Activated naive CD4-positive, alpha-beta T cell treated with anti-CD3 and anti-CD28 coated beads, Interleukin-2, amount 10 ng/mL, durations not matched to agents 7 days and 5 days (primary cell): ENCODE measurements at regions of chr2 and their contacts with region 1.

Region 1: DNA sequence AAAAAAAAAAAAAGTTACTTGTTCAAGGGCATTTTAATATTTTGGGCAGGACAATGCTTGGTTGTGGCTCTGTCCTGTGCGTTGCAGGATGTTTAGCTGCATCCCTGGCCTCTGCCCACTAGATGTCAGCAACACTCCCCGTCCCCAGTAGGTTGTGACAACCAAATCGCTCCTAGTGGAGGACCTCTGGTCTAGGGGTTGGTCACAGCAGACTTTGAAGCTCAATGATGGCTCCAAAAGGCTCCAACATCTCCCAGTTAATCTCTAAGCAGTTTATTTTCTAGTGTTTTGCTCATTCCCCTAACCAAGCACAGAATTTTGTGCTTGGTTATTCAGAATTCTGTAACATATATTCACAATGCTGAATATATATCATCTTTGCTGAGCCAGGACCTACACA is 67.0 kb downstream of the CHRNA1 start:
- DNase-seq: peak; percentile 78
- H3K4me3 Mint-ChIP-seq: no peak overlapping the region
- H3K27ac Mint-ChIP-seq: no peak overlapping the region
- H3K4me1 Mint-ChIP-seq: peaks cover 2% of the 10 kb centered on the region
- H3K27me3 Mint-ChIP-seq: peaks cover 54% of the 10 kb centered on the region

Region 2: DNA sequence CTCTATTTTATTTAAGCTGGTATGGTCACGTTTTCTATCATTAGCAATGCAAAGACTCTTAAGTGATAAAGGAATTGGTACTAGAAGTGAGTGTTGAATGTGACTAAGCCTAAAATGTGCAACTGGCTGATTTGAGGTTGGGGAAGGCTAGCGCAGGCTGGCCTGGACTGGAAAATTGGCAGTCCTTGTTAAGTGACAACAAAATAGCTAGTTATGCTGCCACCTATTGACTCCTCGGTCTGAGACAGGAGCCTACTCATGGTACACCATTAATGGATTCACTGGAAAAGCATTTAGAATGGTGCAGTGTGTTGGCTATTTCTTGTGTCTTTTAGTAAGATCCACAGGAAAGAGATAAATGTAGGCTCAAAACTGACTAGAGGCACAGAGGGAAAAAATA is 94.0 kb before region 1 on chr2:
- CTCF ChIA-PET with region 1: interaction called, 15 read pairs
- DNase-seq: peak; percentile 68
- H3K4me3 Mint-ChIP-seq: no peak overlapping the region
- H3K27ac Mint-ChIP-seq: peak overlapping the region; percentile 65
- H3K4me1 Mint-ChIP-seq: peaks cover 90% of the 10 kb centered on the region
- H3K27me3 Mint-ChIP-seq: no peaks in the 10 kb centered on the region

Region 3: GRCh38 chr2:174644401-174644800 is 52.9 kb before region 1 on chr2:
- CTCF ChIA-PET with region 1: no interaction called
- DNase-seq: no peak
- H3K4me3 Mint-ChIP-seq: no peak overlapping the region
- H3K27ac Mint-ChIP-seq: no peak overlapping the region
- H3K4me1 Mint-ChIP-seq: peaks cover 8% of the 10 kb centered on the region
- H3K27me3 Mint-ChIP-seq: no peaks in the 10 kb centered on the region

Region 4: DNA sequence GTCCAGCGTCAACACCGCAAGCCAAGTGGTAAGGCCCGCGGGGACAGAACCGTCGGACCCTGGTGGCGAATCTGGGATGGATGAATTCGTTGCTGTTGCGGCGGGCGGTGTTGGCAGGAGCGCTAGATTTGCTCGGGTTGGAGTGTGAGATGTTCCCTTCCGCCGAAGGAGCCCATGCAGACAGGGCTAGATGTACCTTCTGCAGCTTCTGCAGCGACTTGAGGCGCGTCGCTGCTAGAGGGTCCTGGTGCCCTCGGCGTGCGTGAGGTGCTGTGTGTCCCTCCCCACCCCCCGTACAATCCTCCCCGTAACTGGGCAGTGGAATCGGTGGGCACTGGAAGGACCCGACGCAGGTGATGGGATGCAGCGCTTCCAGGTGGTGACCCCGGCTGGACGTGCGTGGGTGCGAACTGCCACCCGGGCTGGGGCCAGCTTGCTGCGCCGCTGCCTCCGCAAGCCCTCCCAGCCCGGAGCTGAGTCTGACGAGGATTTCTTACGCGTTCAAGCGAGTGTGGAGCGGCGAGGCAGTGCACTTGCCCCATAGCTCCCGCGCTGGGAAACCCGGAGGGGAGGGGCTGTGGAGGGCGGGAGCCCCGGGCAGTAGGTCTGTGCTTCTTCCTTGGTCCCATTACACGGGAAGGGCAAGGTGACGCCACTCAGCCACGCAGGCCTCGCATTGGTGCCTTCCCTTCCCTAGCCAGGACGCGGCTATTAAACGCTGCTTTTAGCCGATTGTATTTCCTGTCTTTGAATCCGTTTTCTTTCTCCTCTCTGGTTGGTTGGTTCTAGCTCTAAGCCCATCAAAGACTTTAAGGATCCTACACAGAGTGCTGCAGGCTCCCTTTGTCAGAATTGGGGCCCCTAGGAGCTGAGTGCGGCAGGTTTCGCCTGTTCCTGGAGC is 32.8 kb after region 1 on chr2:
- CTCF ChIA-PET with region 1: interaction called, 24 read pairs
- DNase-seq: peak; percentile 57
- H3K4me3 Mint-ChIP-seq: peak overlapping the region; percentile 76
- H3K27ac Mint-ChIP-seq: no peak overlapping the region
- H3K4me1 Mint-ChIP-seq: peaks cover 31% of the 10 kb centered on the region
- H3K27me3 Mint-ChIP-seq: peaks cover 80% of the 10 kb centered on the region

Region 5: DNA sequence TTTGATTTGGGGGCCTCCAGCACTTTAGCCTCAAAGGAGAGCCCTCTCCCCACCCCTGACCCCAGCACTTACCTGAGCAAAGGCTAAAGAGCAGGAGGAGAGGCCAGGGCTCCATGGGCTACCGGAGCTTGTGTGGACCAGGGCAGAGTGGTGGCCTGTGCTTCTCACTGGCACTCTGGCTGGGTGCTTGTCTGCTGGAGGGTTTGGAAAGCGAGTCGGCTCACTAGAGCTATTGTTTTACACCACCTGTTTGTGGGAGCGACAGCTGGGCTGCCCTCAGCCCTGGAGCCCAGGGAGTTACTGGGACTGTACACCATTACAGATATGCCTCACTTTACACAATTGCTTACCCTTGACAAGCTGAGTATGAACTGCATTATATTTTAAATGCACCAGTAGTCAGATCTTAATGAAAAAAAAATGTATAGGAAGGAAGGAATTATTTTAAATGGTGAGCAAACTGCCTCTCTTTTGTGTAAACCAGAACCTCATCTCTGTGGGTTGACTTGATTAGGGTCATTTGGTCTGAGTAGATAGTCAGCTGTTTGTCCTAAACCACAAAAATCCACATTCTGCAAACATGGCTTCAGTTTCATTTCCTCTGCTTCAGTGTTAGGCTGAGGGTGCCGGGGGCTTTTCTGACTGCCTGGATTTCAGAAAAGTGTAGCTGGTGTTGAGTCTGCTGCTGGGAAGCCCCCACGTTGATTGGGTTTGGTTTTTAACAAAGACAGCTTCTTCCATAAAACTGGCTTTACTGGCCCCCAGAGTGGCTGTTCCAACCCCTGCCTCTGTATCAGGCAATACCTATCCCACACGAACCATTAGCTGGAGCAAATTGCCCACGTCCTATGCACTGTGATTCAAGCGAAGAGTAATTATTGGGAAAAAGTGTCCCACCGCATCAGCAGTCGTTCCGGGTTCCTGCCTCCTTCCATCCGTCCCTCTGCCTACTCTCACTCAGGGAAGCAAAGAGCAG is 67.3 kb after region 1 on chr2 and contains the start of gene CHRNA1:
- CTCF ChIA-PET with region 1: interaction called, 17 read pairs
- DNase-seq: no peak
- H3K4me3 Mint-ChIP-seq: no peak within 1 kb of the TSS
- H3K27ac Mint-ChIP-seq: no peak within 1 kb of the TSS
- H3K4me1 Mint-ChIP-seq: peaks cover 18% of the 10 kb centered on the region
- H3K27me3 Mint-ChIP-seq: peaks cover 33% of the 10 kb centered on the region

Region 6: DNA sequence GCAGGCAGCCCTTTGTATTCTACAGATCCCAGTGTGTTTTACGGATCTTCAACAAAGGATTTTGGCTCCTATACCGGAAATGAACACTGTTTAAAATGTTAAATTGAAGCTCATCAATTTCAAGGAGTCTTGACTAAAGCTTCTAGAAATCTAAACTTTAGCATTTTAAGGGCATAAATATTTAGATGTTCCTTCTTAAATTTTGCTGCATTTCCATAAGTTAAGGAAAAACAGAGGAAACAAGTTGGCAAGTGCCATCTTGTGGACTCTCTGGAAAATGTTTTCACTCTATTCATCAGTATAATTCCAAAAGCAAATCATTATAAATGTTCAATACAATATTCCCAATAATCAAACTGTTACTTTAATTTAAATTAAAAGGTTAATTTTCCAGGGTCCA is 288.4 kb after region 1 on chr2:
- CTCF ChIA-PET with region 1: interaction called, 45 read pairs
- DNase-seq: no peak
- H3K4me3 Mint-ChIP-seq: no peak overlapping the region
- H3K27ac Mint-ChIP-seq: no peak overlapping the region
- H3K4me1 Mint-ChIP-seq: no peaks in the 10 kb centered on the region
- H3K27me3 Mint-ChIP-seq: peaks cover 6% of the 10 kb centered on the region